PC-9 (cell line): ENCODE measurements at regions of chr15 and their contacts with region 1.

Region 1: GRCh38 chr15:34209421-34210282 is at the start of gene KATNBL1:
- DNase-seq: peak; percentile 69 to 93
- H3K4me3 ChIP-seq: peak within 1 kb of the TSS; percentile 79
- H3K27ac ChIP-seq: peak within 1 kb of the TSS; percentile 77
- H3K4me1 ChIP-seq: 0 out of 2 replicates have a peak, but pooled peaks cover 6% of the 10 kb centered on the region
- H3K27me3 ChIP-seq: no peaks in the 10 kb centered on the region
- CTCF ChIP-seq: peak; percentile 84
- total RNA-seq, gene KATNBL1: 40.4 and 40.7 TPM in 2 replicates

Region 2: GRCh38 chr15:34056936-34057335 is 152.7 kb before region 1 on chr15:
- CTCF ChIA-PET with region 1: interaction called, 4 read pairs
- POLR2A ChIA-PET with region 1: no interaction called
- intact Hi-C with region 1: loop called (anchors 2 kb)
- DNase-seq: no peak
- H3K4me3 ChIP-seq: no peak overlapping the region
- H3K27ac ChIP-seq: no peak overlapping the region
- H3K4me1 ChIP-seq: no peaks in the 10 kb centered on the region
- H3K27me3 ChIP-seq: no peaks in the 10 kb centered on the region
- CTCF ChIP-seq: no peak

Region 3: GRCh38 chr15:34101366-34102175 is 108.1 kb before region 1 on chr15 and contains the starts of genes EMC7 and PGBD4:
- CTCF ChIA-PET with region 1: no interaction called
- POLR2A ChIA-PET with region 1: no interaction called
- intact Hi-C with region 1: loop called (anchors 2 kb)
- DNase-seq: peak; percentile 92 to 96
- H3K4me3 ChIP-seq: peak within 1 kb of the TSS; percentile 70
- H3K27ac ChIP-seq: peak within 1 kb of the TSS; percentile 65
- H3K4me1 ChIP-seq: peaks cover 19% of the 10 kb centered on the region
- H3K27me3 ChIP-seq: no peaks in the 10 kb centered on the region
- CTCF ChIP-seq: no peak
- total RNA-seq, gene EMC7: 33.9 and 34.3 TPM in 2 replicates
- total RNA-seq, gene PGBD4: 1.8 and 2.0 TPM in 2 replicates

Region 4: DNA sequence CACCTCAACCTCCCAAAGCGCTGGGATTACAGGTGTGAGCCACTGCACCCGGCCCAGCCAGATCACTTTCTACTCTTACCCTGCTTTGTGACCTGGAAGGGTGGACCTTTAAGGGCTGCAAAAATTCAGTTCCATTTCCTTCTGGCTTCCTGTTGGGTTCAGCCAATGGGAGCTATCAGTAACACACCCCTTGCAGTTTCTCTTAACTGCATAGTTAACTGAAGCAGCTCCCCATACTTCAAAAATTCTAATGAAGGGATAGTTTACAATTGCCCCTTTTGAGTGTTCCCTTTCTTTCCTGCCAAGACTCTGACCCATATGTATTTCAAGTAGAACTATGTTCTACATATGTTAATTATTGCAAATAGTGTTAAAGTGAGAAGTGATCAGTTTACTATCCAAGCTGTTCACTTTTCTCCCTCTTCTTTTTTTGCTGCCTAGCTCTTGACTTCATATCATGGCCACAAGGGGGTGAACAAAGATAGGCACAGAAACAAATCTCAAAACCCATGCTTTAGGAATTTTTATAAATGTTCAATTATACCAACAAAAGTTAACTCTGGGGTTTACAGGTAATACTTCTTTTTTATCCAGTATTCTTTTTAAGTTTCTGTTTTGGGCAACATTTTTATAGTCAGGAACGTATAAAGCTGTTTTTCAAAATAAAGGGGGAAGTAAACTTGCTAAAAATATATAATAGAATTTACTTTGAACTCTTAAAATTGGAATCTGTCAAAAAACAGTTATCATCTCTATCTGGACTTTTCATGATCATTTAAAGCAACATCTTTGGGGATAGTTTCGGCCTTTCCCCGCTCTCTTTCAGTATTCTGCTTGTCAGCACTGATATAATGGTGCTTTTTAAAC is 99.6 kb before region 1 on chr15:
- CTCF ChIA-PET with region 1: interaction called, 19 read pairs
- POLR2A ChIA-PET with region 1: interaction called, 6 read pairs
- intact Hi-C with region 1: loop called (anchors 1 kb)
- DNase-seq: peak in 1 of 2 experiments; percentile 13
- H3K4me3 ChIP-seq: no peak overlapping the region
- H3K27ac ChIP-seq: no peak overlapping the region
- H3K4me1 ChIP-seq: no peaks in the 10 kb centered on the region
- H3K27me3 ChIP-seq: no peaks in the 10 kb centered on the region
- CTCF ChIP-seq: peak; percentile 76

Region 5: DNA sequence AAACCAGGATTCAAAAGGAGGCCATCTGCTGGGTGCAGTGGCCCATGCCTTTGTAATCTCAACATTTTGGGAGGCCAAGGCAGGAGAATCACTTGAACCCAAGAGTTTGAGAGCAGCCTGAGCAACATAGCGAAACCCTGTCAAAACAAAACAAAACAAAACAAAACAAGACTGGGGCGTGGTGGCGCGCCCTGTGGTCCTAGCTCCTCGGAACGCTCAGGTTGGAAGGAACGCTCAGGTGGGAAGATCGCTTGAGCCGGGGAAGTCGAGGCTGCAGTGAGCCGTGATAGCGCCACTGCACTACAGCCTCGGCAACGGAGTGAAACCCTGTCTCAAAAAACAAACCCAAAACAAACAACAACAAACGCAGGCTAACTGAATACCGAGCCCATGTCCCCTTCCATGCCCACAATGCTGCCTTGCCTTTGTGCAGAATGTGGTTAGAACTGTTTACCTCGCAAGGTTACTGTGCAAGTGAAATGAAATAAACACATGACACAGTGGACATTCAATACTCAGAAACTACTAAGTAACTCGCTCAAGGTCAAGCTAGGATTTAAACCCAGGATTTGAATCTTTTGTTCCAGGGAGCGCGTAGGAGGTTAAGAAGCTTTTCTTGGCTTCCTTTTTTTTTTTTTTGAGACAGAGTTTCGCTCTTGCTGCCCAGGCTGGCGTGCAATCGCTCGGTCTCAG is 14.4 kb after region 1 on chr15:
- CTCF ChIA-PET with region 1: no interaction called
- POLR2A ChIA-PET with region 1: no interaction called
- intact Hi-C with region 1: loop called (anchors 1 kb)
- DNase-seq: peak in 1 of 2 experiments; percentile 1
- H3K4me3 ChIP-seq: peak overlapping the region; percentile 77
- H3K27ac ChIP-seq: peak overlapping the region; percentile 98
- H3K4me1 ChIP-seq: peaks cover 6% of the 10 kb centered on the region; the same call in 1 of the 2 replicates
- H3K27me3 ChIP-seq: no peaks in the 10 kb centered on the region
- CTCF ChIP-seq: no peak